ENCODE measurements at regions of chr12 and their contacts with region 1.

Region 1: GRCh38 chr12:118372541-118373495 is at the start of gene TAOK3:
- DNase-seq: peak; percentile 98
- H3K4me3 Mint-ChIP-seq: peak within 1 kb of the TSS; percentile 95
- H3K27ac Mint-ChIP-seq: peak within 1 kb of the TSS; percentile 90
- H3K4me1 Mint-ChIP-seq: peaks cover 52% of the 10 kb centered on the region
- H3K27me3 Mint-ChIP-seq: no peaks in the 10 kb centered on the region
- total RNA-seq, gene TAOK3: 61.9 to 65.5 TPM

Region 2: DNA sequence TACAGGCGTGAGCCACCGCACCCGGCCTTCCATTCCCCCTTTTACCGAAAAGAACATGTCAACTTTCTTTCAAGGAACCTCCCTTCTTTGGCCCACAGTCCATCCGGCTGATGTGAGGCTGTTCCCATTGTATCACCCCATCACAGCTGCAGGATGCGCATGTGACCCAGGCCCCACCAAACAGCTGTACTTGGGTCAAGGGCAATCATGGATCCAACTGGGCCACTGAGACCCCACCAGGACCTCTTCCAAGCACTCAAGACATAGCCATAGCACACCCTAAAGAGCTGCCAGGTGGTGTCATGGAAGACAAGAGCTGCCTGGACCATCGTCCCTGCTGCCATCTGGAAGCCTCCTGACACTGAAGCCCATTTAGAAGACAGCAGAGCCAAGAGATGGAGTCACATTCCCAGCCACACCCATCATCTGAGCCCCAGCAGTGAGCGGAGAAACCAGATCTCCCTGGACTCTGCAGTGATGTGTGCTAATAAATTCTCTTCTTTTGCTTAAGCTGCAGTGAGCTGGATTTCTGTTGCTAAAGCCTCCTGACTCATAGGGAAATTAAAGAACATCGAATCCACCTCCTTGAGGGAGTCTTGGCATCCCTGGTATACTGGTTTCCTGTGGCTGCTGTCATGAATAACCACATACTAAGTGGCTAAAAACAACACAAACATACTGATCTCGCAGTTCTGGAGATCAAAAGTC is 509.7 kb before region 1 on chr12:
- CTCF ChIA-PET with region 1: no interaction called
- POLR2A ChIA-PET with region 1: no interaction called
- DNase-seq: no peak
- H3K4me3 Mint-ChIP-seq: no peak overlapping the region
- H3K27ac Mint-ChIP-seq: no peak overlapping the region
- H3K4me1 Mint-ChIP-seq: no peaks in the 10 kb centered on the region
- H3K27me3 Mint-ChIP-seq: peaks cover 2% of the 10 kb centered on the region

Region 3: DNA sequence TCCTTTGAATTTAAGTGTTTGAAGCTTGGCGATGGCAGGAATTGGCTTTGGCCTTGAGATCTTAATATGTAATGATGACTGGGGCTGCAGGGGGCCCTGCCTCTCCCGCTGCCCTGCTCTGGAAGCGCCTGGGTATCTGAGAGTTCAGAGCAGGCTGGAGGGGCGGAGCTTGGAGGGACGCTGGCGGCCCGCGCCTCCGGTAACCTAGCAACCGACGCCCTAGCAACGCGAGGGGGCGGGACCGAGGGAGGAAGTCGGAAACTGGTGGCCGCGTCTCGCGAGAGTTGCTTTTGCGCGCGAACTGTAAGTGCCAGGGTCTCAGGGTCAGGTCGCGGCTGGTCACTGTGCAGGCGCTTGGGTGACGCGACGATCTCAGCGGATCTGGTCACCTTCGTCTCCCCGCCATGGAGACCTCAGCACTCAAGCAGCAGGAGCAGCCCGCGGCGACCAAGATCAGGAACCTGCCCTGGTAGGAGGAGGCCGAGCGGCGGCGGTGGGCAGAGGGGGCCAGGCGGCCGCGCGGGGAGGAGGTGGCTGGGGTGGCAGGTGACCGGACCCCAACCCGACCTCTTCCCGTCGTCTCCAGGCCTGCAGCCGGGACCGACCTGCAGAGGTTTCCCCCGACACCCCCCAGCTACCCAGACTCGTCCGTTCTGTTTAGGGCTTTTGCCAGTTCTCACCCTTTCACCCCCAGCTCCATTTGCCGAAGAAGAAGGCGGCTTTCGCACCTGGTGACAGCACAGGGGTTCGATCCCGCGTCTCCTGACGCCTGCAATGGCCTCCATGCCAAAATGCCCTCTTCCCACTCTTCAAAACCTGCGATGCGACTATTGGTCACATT is 356.2 kb before region 1 on chr12 and contains the start of gene RFC5:
- CTCF ChIA-PET with region 1: interaction called, 11 read pairs
- POLR2A ChIA-PET with region 1: interaction called, 5 read pairs
- DNase-seq: peak; percentile 98
- H3K4me3 Mint-ChIP-seq: peak within 1 kb of the TSS; percentile 84
- H3K27ac Mint-ChIP-seq: peak within 1 kb of the TSS; percentile 84
- H3K4me1 Mint-ChIP-seq: peaks cover 29% of the 10 kb centered on the region
- H3K27me3 Mint-ChIP-seq: peaks cover 4% of the 10 kb centered on the region
- total RNA-seq, gene RFC5: 39.7 to 41.0 TPM

Region 4: DNA sequence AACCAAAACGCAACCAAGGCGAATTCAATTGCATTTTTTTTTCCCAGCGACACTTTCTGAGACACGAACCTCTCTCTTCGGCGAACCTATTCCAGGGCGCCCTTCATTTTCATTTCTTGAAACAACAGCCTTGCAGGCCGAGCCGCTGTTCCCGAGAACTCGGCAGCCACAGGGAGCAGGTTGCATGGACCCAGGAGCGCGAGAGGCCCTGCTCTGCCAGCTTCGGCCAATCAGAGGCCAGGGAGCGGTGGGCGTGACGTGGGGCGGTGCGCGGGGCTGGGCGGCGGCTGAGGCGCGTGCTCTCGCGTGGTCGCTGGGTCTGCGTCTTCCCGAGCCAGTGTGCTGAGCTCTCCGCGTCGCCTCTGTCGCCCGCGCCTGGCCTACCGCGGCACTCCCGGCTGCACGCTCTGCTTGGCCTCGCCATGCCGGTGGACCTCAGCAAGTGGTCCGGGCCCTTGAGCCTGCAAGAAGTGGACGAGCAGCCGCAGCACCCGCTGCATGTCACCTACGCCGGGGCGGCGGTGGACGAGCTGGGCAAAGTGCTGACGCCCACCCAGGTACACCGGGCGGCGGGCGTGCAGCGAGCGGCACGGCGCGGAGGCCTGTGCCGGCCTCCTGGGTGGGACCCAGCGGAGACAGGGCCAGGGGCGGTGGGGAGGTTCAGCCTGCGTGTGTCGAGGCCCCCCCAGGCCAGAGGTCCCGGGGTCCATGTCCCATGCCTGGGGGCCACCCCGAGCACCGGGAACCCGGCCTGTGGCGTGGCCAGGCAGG is 236.8 kb before region 1 on chr12 and contains the start of gene PEBP1:
- CTCF ChIA-PET with region 1: interaction called, 11 read pairs
- POLR2A ChIA-PET with region 1: interaction called, 22 read pairs
- DNase-seq: peak; percentile 94
- H3K4me3 Mint-ChIP-seq: peak within 1 kb of the TSS; percentile 82
- H3K27ac Mint-ChIP-seq: peak within 1 kb of the TSS; percentile 84
- H3K4me1 Mint-ChIP-seq: peaks cover 33% of the 10 kb centered on the region
- H3K27me3 Mint-ChIP-seq: no peaks in the 10 kb centered on the region
- total RNA-seq, gene PEBP1: 75.5 to 76.7 TPM

Region 5: DNA sequence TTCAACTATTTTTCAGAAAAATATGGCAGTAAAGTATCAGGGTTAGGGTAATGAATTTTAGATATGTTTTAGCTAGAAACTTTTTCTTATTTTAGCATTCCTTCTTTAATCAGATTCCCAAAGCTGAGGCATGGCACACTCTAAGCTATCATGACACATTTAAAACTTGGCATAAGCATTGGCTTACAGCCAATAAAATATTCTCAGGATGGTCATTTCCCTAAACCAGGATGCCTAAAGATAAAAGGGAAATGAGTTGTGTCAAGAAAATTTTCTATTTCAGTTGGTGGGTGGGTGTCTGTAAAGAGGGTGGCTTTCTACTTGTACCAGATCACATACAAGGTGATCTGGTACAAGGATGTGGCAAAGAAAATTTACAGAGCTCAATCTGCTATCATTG is 189.1 kb before region 1 on chr12:
- CTCF ChIA-PET with region 1: interaction called, 69 read pairs
- POLR2A ChIA-PET with region 1: interaction called, 10 read pairs
- DNase-seq: no peak
- H3K4me3 Mint-ChIP-seq: no peak overlapping the region
- H3K27ac Mint-ChIP-seq: no peak overlapping the region
- H3K4me1 Mint-ChIP-seq: peaks cover 6% of the 10 kb centered on the region
- H3K27me3 Mint-ChIP-seq: no peaks in the 10 kb centered on the region

Region 6: DNA sequence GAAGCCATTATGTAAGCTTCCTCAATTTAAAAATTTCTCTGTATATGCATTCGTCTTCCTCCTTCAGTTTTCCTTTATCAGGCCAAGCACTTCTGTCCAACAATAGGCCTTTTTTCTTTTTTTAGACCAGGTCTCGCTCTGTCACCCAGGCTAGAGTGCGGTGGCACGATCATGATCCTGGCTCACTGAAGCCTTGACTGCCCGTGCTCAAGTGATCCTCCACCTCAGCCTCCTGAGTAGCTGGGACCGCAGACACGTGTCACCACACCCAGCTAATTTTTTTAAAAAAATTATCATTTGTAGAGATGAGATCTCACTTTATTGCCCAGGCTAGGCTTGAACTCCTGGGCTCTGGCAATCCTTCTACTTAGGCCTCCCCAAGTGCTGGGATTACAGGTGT is 25.9 kb before region 1 on chr12:
- CTCF ChIA-PET with region 1: interaction called, 13 read pairs
- POLR2A ChIA-PET with region 1: no interaction called
- DNase-seq: no peak
- H3K4me3 Mint-ChIP-seq: no peak overlapping the region
- H3K27ac Mint-ChIP-seq: no peak overlapping the region
- H3K4me1 Mint-ChIP-seq: peaks cover 9% of the 10 kb centered on the region
- H3K27me3 Mint-ChIP-seq: no peaks in the 10 kb centered on the region

Region 7: DNA sequence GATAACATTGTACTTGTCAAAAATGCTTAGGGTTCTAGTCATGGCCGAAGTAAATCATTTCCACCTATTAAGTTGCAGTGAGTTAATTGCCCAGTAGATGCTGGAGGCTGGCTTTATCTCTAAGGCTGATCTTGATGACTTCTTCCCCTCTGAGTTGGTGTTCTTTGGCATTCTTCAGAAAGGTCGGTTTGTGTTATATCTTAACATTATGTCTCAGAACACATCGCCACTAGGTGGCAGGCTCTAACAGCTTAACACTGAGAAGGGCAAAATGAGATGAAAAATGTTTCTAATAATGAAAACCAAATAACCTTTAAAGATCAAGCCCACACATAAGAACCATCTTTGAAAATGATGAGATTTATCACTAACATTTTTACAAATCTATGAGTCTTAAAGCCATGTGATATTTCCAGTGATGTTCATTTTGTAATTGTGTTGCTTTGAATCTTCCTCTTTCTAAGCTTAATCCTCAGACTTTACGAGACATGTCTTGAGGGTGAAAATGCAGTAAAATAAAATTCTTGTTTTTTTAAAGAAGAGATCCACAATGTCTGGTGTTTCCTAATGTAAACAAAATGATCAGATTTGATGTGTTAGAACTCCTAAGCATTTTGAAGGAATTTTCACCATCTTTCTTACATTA is 32.2 kb after region 1 on chr12:
- CTCF ChIA-PET with region 1: interaction called, 21 read pairs
- POLR2A ChIA-PET with region 1: no interaction called
- DNase-seq: peak; percentile 58
- H3K4me3 Mint-ChIP-seq: no peak overlapping the region
- H3K27ac Mint-ChIP-seq: no peak overlapping the region
- H3K4me1 Mint-ChIP-seq: no peaks in the 10 kb centered on the region
- H3K27me3 Mint-ChIP-seq: no peaks in the 10 kb centered on the region

Region 8: DNA sequence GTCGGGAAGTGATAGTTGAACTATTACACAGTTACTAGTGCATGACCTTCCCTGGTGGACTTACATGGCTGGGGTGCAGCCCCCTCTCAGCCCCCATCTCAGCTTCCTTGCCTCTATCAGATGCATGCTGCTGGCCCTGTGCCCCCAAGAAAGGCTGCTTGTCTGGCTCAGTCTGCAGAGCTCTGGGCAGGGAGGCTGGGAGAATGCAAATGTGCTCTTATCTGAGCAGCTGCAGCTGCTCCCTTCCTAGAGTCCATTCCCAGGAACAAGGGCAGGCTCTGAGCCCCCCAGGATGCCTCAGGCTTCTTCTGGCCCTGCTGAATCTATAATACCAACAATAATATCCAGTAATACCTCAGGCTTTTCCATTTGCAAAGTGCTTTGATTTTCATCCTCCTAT is 390.4 kb after region 1 on chr12:
- CTCF ChIA-PET with region 1: no interaction called
- POLR2A ChIA-PET with region 1: no interaction called
- DNase-seq: no peak
- H3K4me3 Mint-ChIP-seq: no peak overlapping the region
- H3K27ac Mint-ChIP-seq: no peak overlapping the region
- H3K4me1 Mint-ChIP-seq: no peaks in the 10 kb centered on the region
- H3K27me3 Mint-ChIP-seq: no peaks in the 10 kb centered on the region